ENCODE measurements at regions of chr15 and their contacts with region 1.

Region 1: DNA sequence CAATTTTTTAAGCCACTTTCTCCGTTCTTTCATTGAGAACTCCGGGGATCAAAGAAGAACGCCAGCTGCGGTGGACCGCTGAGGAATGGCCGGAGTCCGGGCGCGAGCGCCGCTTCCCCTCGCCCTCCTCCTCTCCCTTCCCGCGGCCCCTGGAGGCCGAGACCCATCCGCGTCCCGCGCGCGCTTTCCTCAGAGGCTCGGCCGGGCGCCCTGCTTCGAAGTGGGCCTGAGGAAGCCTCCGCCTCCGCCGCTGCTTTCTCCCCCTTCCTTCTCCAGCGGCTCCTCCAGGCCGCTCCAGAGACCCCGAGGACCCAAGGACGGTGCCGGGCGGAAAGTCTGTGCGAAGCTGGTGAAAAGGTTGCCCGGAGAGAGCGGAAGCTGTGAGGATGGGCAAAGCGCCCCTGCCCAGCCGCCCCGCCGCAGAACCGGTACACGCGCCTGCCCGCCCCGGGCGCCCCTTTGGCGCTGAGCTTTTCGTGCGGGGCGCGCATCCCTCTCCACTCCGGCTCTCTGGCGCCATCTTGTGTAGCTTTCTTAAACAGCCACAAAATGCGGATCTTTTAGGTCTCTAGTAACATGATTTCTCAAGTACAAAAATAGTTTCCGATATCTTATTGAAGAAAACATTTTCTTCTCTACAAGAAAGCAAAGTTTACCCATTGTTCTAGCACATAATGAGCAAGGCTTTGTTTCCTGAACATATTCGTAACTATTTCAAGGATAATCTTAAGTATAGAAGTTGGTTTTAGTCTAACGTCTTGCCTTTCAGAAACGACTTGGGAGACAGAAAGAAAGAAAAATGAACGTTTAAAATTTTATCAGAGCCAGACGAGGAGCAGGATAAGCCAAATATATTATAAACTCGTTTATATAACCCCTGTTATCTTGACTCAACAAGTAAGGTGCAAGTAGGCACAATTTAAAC is 59.2 kb upstream of the FAM174B start:
- DNase-seq: peak; percentile 69 to 90
- H3K4me3 ChIP-seq: peak overlapping the region; percentile 40
- H3K4me1 ChIP-seq: peaks cover 8% of the 10 kb centered on the region; the same call in 1 of the 2 replicates
- H3K27me3 ChIP-seq: no peaks in the 10 kb centered on the region

Region 2: GRCh38 chr15:92391640-92392039 is 323.1 kb before region 1 on chr15:
- in situ Hi-C with region 1: loop called (anchors 10 kb)
- DNase-seq: peak; percentile 57 to 70
- H3K4me3 ChIP-seq: no peak overlapping the region
- H3K4me1 ChIP-seq: peaks cover 15% of the 10 kb centered on the region
- H3K27me3 ChIP-seq: peaks cover 41% of the 10 kb centered on the region

Region 3: GRCh38 chr15:92521624-92522008 is 193.1 kb before region 1 on chr15:
- in situ Hi-C with region 1: loop called (anchors 25 kb)
- DNase-seq: peak; percentile 90 to 93
- H3K4me3 ChIP-seq: no peak overlapping the region
- H3K4me1 ChIP-seq: peaks cover 12% of the 10 kb centered on the region
- H3K27me3 ChIP-seq: no peaks in the 10 kb centered on the region